GM12878 (cell line): ENCODE measurements at regions of chrX and their contacts with region 1.

Region 1: GRCh38 chrX:66200855-66201795 is 37.1 kb downstream of the HEPH start:
- DNase-seq: no peak
- ATAC-seq: peak; percentile 59
- H3K4me3 ChIP-seq: no peak overlapping the region
- H3K27ac ChIP-seq: no peak overlapping the region
- H3K4me1 ChIP-seq: no peaks in the 10 kb centered on the region
- H3K27me3 ChIP-seq: no peaks in the 10 kb centered on the region
- CTCF ChIP-seq: peak; percentile 16 to 40 (median 35); a peak in 5 of 6 replicates
- EP300 ChIP-seq: no peak
- POLR2A ChIP-seq: no peak
- RAD21 ChIP-seq: peak; percentile 56

Region 2: GRCh38 chrX:66030505-66031317 is 170.4 kb before region 1 on chrX:
- CTCF ChIA-PET with region 1: interaction called, 5 read pairs
- POLR2A ChIA-PET with region 1: no interaction called
- RAD21 ChIA-PET with region 1: interaction called, 3 read pairs
- SMC1A ChIA-PET with region 1: interaction called, 11 read pairs
- in situ Hi-C with region 1: no loop called
- intact Hi-C with region 1: loop called (anchors 2 kb)
- DNase-seq: no peak
- ATAC-seq: peak; percentile 97
- H3K4me3 ChIP-seq: no peak overlapping the region
- H3K27ac ChIP-seq: no peak overlapping the region
- H3K4me1 ChIP-seq: no peaks in the 10 kb centered on the region
- H3K27me3 ChIP-seq: no peaks in the 10 kb centered on the region
- CTCF ChIP-seq: peak; percentile 58 to 85 (median 78)
- EP300 ChIP-seq: no peak
- POLR2A ChIP-seq: no peak
- RAD21 ChIP-seq: peak; percentile 74

Region 3: DNA sequence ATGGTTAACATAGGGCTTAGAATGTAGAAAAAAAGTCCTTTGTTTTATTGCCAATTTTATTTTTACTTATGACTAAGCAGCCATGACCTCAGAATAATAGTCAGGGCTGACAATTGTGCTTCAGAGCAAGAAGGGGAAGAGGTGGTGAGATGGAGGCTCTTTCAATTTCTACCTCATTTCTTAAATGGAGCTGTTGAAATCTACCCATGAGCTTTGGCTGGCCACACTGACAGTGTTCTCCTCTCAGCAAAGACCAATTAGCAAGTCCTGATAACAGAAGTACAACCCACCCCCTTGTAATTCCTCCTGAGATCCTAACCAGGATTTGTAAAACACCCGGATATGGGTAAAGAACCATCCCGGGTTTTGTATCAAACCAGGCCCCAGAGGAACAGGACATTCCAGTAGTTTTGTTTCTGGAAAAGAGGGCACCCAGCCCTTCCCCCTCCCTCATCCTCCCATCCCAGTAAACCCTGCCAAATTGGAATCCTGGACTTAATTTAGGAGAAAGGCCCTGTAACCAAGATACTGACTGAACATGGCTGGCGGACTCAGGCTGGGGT is 37.2 kb before region 1 on chrX and contains the start of gene HEPH:
- CTCF ChIA-PET with region 1: interaction called, 8 read pairs
- POLR2A ChIA-PET with region 1: no interaction called
- RAD21 ChIA-PET with region 1: interaction called, 3 read pairs
- SMC1A ChIA-PET with region 1: interaction called, 14 read pairs
- in situ Hi-C with region 1: no loop called
- intact Hi-C with region 1: no loop called
- DNase-seq: peak; percentile 12
- ATAC-seq: peak; percentile 86
- H3K4me3 ChIP-seq: no peak within 1 kb of the TSS
- H3K27ac ChIP-seq: no peak within 1 kb of the TSS
- H3K4me1 ChIP-seq: no peaks in the 10 kb centered on the region; the same call in 1 of the 2 replicates
- H3K27me3 ChIP-seq: no peaks in the 10 kb centered on the region
- CTCF ChIP-seq: no peak
- EP300 ChIP-seq: 0 out of 4 replicates have a peak, but pooled peaks of 1 of the 2 experiments have one; percentile 7
- POLR2A ChIP-seq: no peak
- RAD21 ChIP-seq: no peak
- polyA plus RNA-seq, gene HEPH: 0.20 to 0.56 TPM

Region 4: DNA sequence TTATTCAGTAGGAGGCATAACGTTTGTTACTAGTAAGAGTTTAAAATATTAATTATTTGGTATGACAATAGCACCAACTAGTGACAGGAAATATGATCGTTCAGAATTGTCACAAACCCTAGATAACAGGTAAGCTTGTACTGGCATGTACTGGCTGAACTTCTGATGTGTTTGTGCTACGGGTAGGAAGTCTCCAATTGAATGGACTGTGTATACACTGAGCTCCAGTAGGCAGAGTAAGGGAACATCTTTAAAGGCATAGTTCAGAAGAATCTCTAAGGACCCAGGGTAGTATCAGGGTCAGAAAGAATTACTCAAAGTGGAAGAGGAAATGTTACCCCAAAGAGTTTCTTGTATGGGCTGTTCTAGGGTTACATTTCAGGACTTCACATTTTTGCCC is 207.4 kb after region 1 on chrX:
- CTCF ChIA-PET with region 1: interaction called, 24 read pairs
- POLR2A ChIA-PET with region 1: no interaction called
- RAD21 ChIA-PET with region 1: interaction called, 8 read pairs
- SMC1A ChIA-PET with region 1: interaction called, 5 read pairs
- in situ Hi-C with region 1: no loop called
- intact Hi-C with region 1: loop called (anchors 2 kb)
- DNase-seq: peak; percentile 11
- ATAC-seq: peak; percentile 79
- H3K4me3 ChIP-seq: no peak overlapping the region
- H3K27ac ChIP-seq: no peak overlapping the region
- H3K4me1 ChIP-seq: no peaks in the 10 kb centered on the region
- H3K27me3 ChIP-seq: no peaks in the 10 kb centered on the region
- CTCF ChIP-seq: peak; percentile 46 to 56 (median 49); a peak in 4 of 6 replicates
- EP300 ChIP-seq: no peak
- POLR2A ChIP-seq: no peak
- RAD21 ChIP-seq: peak; percentile 57

Region 5: GRCh38 chrX:66728818-66729271 is 527.7 kb after region 1 on chrX:
- CTCF ChIA-PET with region 1: interaction called, 25 read pairs
- POLR2A ChIA-PET with region 1: interaction called, 6 read pairs
- RAD21 ChIA-PET with region 1: interaction called, 22 read pairs
- SMC1A ChIA-PET with region 1: interaction called, 17 read pairs
- in situ Hi-C with region 1: no loop called
- intact Hi-C with region 1: loop called (anchors 2 kb)
- DNase-seq: no peak
- ATAC-seq: peak; percentile 69
- H3K4me3 ChIP-seq: no peak overlapping the region
- H3K27ac ChIP-seq: no peak overlapping the region
- H3K4me1 ChIP-seq: no peaks in the 10 kb centered on the region
- H3K27me3 ChIP-seq: no peaks in the 10 kb centered on the region
- CTCF ChIP-seq: peak; percentile 42 to 59 (median 55); a peak in 5 of 6 replicates
- EP300 ChIP-seq: no peak
- POLR2A ChIP-seq: no peak
- RAD21 ChIP-seq: peak; percentile 58